Activated CD4-positive, alpha-beta memory T cell treated with anti-CD3 and anti-CD28 coated beads for 36 hours (primary cell): ENCODE measurements at regions of chr12 and their contacts with region 1.

Region 1: DNA sequence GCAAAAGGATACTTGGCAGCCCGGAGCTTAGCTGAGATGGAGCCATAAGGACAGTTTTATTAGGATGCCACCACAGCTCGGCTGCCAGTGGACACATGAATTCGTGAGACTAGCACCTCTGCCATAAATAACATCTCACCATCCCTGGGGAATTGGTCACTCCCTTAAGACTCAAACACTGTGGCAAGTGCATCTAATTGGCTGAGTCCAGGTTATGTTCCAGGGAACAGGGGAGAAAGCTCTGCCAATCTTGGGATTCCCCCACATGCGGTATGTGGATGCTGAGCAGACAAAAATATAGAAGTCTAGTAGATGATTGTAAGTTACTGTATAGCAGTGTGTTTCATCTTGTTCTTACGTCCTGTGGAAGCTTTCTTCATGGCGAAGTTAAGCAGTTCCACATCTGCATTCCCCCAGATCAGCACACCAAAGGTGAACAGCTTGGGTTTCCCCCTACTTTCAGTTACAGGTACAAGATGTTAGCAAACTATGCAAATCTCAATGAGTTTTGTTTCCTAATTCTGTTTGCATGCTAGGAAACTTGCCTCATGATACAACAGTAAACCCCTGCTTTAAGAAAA is 131.1 kb downstream of the ETV6 start:
- DNase-seq: peak; percentile 34
- H3K4me3 Mint-ChIP-seq: no peak overlapping the region
- H3K27ac Mint-ChIP-seq: peak overlapping the region; percentile 89
- H3K4me1 Mint-ChIP-seq: peaks cover 83% of the 10 kb centered on the region
- H3K27me3 Mint-ChIP-seq: no peaks in the 10 kb centered on the region

Region 2: GRCh38 chr12:11822081-11822834 is 41.6 kb after region 1 on chr12:
- CTCF ChIA-PET with region 1: no interaction called
- POLR2A ChIA-PET with region 1: interaction called, 3 read pairs
- intact Hi-C with region 1: loop called (anchors 2 kb)
- DNase-seq: peak; percentile 83
- H3K4me3 Mint-ChIP-seq: peak overlapping the region; percentile 49
- H3K27ac Mint-ChIP-seq: peak overlapping the region; percentile 87
- H3K4me1 Mint-ChIP-seq: peaks cover 66% of the 10 kb centered on the region
- H3K27me3 Mint-ChIP-seq: no peaks in the 10 kb centered on the region